Left ventricle myocardium inferior (tissue), 1 donor: ENCODE measurements at regions of chr11 and their contacts with region 1.

Region 1: DNA sequence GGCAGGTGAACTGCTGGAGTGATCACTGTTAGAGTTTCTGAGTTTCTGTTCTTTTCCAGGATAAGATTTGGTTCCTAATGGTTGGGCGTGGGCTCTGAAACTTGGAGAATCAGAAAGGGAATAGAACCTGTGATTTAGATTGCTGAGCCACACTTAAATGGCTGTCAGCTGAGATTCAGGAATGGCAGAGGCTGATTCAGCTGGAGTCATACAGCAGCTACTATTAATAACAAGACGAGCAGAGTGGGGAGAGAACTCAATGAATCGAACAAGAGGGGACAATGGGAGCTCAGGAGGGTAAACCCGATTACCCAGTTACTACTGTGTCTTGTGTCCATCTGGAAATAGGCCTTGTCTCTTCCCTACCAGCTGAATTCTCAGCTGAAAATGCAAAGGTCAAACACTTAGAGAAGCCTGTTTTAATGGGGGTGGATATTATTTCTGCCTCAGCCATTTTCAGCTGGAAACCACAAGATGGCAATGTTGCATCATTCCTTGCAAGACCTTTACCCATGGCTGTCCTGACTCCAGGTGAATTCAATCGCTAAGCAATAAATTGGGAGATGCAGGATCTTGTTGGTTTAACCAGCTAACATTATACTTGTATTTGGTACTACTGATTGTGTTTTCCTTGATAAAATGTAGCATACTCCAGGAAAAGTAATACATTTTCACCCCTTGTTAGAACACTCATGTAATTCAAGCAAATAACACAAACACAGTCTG is 104.5 kb upstream of the RAG2 start:
- DNase-seq: no peak
- H3K4me3 ChIP-seq: no peak overlapping the region
- H3K27ac ChIP-seq: peak overlapping the region; percentile 34
- H3K4me1 ChIP-seq: no peaks in the 10 kb centered on the region
- H3K27me3 ChIP-seq: no peaks in the 10 kb centered on the region
- CTCF ChIP-seq: peak; percentile 83

Region 2: DNA sequence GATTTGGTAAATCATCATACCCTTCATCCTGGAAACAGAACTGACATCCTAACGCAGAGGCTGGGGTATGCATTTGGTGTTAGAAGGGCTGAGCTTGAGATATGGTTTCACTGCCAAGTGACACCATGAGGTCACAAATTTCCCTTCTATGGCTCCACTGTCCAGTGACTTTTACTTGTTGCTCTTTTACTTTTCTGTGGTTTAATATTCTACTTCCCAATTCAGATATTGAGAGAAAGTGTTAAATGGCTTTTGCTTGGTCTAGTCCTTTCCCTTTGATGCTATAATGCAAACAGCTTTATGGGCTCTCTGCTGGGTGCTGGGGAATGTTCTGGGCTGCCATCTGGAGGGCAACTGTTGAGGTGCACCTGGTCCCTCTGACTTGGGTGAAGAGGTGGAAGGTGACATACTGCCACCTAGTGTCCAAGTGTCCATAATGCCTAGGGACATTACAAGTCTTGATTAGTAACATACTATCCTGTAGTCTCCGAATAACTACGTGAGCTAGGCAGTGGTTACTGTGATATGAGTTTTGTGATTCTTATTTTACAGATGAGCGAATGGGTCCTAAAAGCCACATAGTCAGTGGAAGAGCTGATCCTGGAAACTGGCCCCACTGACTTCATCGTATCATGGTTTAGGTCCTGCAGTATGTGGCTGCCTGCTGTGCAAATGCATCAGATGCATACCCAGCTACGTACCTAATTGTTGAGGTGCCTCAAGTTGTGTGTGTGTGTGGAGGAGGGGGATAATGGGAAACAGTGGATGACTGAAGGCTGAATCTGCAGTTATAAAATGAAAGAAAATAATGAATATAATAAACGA is 44.6 kb after region 1 on chr11:
- intact Hi-C with region 1: loop called (anchors 2 kb)
- DNase-seq: peak; percentile 83
- H3K4me3 ChIP-seq: no peak overlapping the region
- H3K27ac ChIP-seq: no peak overlapping the region
- H3K4me1 ChIP-seq: peaks cover 4% of the 10 kb centered on the region
- H3K27me3 ChIP-seq: peaks cover 34% of the 10 kb centered on the region
- CTCF ChIP-seq: peak; percentile 100